Activated CD4-positive, alpha-beta T cell treated with anti-CD3 and anti-CD28 coated beads for 36 hours (primary cell): ENCODE measurements at regions of chr5 and their contacts with region 1.

Region 1: DNA sequence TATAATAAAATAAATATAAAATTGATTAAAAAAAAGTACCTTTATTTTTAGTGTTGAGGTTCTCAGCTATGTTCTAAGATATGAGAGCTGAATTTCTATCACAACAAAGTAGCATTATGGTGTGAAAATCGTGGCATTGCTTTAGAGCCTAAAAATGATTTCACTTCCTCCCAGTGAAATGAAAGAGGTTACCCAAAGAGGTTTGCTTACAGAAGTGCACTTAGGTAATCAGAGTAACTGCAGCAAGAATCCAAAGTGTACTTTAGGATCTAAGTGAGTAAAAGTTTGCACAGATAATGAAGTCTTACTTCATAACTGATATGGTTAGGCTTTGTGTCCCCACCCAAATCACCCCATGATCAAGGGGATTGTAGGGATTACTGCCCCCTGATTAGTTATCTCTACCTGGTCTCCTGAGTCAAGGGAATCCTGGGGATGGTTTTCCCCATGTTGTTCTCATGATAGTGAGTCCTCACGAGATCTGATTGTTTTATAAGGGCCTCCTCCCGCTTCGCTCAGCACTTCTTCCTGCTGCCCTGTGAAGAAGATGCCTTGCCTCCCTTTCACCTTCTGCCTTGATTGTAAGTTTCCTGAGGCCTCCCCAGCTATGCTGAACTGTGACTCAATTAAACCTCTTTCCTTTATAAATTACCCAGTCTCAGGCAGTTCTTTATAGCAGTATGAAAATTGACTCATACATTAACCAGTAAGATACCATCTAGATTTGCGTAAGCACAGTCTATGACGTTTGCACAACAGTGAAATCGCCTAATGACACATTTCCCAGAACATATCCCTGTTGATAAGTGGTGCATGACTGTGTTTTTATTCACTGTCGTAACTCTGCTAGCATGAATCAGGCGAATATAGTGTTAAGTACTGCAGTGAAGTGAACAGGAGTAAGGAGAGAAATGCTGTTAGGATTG is 40.3 kb upstream of the LRRC70 start:
- DNase-seq: peak; percentile 28
- ATAC-seq: peak; percentile 94
- H3K4me3 Mint-ChIP-seq: no peak overlapping the region
- H3K27ac Mint-ChIP-seq: peak overlapping the region; percentile 86
- H3K4me1 Mint-ChIP-seq: peaks cover 15% of the 10 kb centered on the region
- H3K27me3 Mint-ChIP-seq: no peaks in the 10 kb centered on the region

Region 2: GRCh38 chr5:62569470-62569869 is 31.2 kb after region 1 on chr5:
- CTCF ChIA-PET with region 1: no interaction called
- POLR2A ChIA-PET with region 1: no interaction called
- intact Hi-C with region 1: loop called (anchors 2 kb)
- DNase-seq: no peak
- ATAC-seq: peak; percentile 91
- H3K4me3 Mint-ChIP-seq: no peak overlapping the region
- H3K27ac Mint-ChIP-seq: no peak overlapping the region
- H3K4me1 Mint-ChIP-seq: peaks cover 24% of the 10 kb centered on the region
- H3K27me3 Mint-ChIP-seq: no peaks in the 10 kb centered on the region

Region 3: DNA sequence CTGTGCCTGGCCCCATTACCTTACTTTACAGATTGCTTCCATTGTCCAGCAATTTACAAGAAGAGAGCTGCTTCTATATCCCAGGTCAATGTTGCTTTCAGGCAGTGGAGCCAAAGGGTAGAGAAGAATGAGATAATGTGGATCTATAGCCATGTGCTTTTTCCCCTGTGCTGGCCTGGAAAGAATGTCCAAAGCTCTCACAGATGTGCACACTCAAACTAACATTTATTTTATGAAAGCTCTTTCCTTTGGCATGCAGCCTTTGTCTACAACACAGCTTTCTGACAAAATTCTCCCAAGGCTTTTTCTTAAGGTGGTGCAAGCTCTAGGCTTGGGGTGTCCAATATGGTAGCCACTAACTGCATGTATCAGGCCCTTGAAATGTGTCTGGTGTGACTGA is 257.6 kb after region 1 on chr5:
- CTCF ChIA-PET with region 1: no interaction called
- POLR2A ChIA-PET with region 1: no interaction called
- intact Hi-C with region 1: no loop called
- DNase-seq: no peak
- ATAC-seq: no peak
- H3K4me3 Mint-ChIP-seq: no peak overlapping the region
- H3K27ac Mint-ChIP-seq: no peak overlapping the region
- H3K4me1 Mint-ChIP-seq: no peaks in the 10 kb centered on the region
- H3K27me3 Mint-ChIP-seq: peaks cover 2% of the 10 kb centered on the region